Activated CD8-positive, alpha-beta T cell treated with anti-CD3 and anti-CD28 coated beads for 36 hours (primary cell): ENCODE measurements at regions of chr9 and their contacts with region 1.

Region 1: DNA sequence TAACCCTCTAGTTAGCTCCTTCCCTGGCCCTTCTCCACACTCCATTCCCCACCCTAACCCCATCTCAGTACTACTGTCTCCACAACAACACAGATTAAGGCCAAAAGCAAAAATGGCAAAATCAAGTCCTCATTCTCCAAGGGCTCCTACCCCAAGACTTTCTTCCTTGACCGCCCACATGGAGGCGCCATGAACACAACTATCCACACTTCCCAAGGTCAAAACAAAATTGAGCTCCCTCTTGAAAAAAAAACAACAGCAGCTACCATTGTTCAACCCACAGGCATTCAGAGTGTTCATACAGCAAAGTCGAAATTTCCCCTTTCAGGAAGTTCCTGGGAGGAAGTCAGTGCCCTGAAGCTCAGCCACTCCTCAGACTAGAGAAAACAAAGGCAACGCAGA is 54.4 kb downstream of the GNAQ start:
- DNase-seq: peak; percentile 68
- ATAC-seq: no peak
- H3K4me3 Mint-ChIP-seq: no peak overlapping the region
- H3K27ac Mint-ChIP-seq: peak overlapping the region; percentile 90
- H3K4me1 Mint-ChIP-seq: peaks cover 54% of the 10 kb centered on the region
- H3K27me3 Mint-ChIP-seq: no peaks in the 10 kb centered on the region
- CTCF ChIP-seq: peak; percentile 38

Region 2: GRCh38 chr9:77848897-77849296 is 128.3 kb before region 1 on chr9:
- CTCF ChIA-PET with region 1: no interaction called
- POLR2A ChIA-PET with region 1: no interaction called
- intact Hi-C with region 1: no loop called
- DNase-seq: no peak
- ATAC-seq: no peak
- H3K4me3 Mint-ChIP-seq: no peak overlapping the region
- H3K27ac Mint-ChIP-seq: no peak overlapping the region
- H3K4me1 Mint-ChIP-seq: peaks cover 25% of the 10 kb centered on the region
- H3K27me3 Mint-ChIP-seq: no peaks in the 10 kb centered on the region
- CTCF ChIP-seq: no peak

Region 3: GRCh38 chr9:77884395-77884851 is 92.8 kb before region 1 on chr9:
- CTCF ChIA-PET with region 1: no interaction called
- POLR2A ChIA-PET with region 1: no interaction called
- intact Hi-C with region 1: no loop called
- DNase-seq: no peak
- ATAC-seq: no peak
- H3K4me3 Mint-ChIP-seq: no peak overlapping the region
- H3K27ac Mint-ChIP-seq: no peak overlapping the region
- H3K4me1 Mint-ChIP-seq: peaks cover 19% of the 10 kb centered on the region
- H3K27me3 Mint-ChIP-seq: no peaks in the 10 kb centered on the region
- CTCF ChIP-seq: no peak

Region 4: DNA sequence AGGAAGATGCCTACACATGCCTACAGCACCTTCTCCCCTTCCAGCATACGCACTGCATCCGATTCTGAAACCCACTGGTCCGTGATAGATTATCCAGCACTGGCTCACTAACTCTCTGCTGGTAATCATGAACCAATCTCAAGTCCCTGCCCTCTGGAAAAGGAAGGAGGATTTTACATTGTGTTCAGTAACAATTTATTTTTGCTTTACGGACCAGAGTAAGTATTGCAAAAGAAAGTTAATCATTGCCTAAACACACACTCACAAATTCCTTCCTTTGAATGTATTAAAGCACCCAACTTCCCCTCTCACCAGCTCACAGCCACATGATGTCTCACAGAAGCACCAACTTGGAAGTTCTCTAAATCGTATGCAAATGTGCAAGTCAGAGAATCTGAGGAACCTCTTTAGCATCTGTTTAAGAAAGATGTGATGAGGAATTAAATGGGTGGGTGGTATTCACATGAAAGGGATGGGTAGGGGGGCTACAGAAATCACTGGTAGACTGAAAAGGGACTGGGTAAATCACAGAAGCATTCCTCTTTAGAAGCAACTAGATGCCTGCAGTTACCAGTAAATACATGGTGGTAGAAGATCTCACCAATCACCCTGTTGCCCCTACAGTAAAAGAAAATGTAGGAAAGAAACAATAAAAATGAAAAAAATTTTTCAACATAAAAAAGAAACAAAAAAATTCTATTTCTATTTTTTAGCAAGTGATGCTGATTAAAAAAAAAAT is 46.0 kb after region 1 on chr9:
- CTCF ChIA-PET with region 1: interaction called, 5 read pairs
- POLR2A ChIA-PET with region 1: no interaction called
- intact Hi-C with region 1: loop called (anchors 5 kb)
- DNase-seq: peak; percentile 11
- ATAC-seq: peak; percentile 49
- H3K4me3 Mint-ChIP-seq: peak overlapping the region; percentile 45
- H3K27ac Mint-ChIP-seq: peak overlapping the region; percentile 49
- H3K4me1 Mint-ChIP-seq: peaks cover 41% of the 10 kb centered on the region
- H3K27me3 Mint-ChIP-seq: no peaks in the 10 kb centered on the region
- CTCF ChIP-seq: no peak

Region 5: DNA sequence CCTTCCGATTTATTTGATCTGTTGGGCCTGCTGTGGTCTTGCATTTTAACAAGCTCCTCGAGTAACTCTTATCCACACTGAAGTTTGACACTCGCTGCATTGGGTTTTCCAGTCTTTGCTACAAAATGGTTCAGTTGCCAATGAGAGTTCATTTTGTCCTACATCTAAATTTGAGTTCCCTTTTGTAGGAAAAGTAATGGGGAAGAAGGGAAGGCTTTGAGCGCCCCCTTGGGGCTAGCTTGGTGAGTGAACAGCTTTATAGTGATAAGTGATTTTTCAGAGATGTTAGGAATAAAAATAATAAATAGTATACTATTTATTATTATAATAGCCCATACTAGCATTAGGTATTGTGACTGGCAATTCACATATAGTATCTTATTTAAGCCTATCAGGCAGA is 144.3 kb after region 1 on chr9:
- CTCF ChIA-PET with region 1: interaction called, 23 read pairs
- POLR2A ChIA-PET with region 1: no interaction called
- intact Hi-C with region 1: loop called (anchors 5 kb)
- DNase-seq: peak; percentile 68
- ATAC-seq: no peak
- H3K4me3 Mint-ChIP-seq: no peak overlapping the region
- H3K27ac Mint-ChIP-seq: no peak overlapping the region
- H3K4me1 Mint-ChIP-seq: peaks cover 23% of the 10 kb centered on the region
- H3K27me3 Mint-ChIP-seq: peaks cover under 1% of the 10 kb centered on the region
- CTCF ChIP-seq: peak; percentile 87

Region 6: DNA sequence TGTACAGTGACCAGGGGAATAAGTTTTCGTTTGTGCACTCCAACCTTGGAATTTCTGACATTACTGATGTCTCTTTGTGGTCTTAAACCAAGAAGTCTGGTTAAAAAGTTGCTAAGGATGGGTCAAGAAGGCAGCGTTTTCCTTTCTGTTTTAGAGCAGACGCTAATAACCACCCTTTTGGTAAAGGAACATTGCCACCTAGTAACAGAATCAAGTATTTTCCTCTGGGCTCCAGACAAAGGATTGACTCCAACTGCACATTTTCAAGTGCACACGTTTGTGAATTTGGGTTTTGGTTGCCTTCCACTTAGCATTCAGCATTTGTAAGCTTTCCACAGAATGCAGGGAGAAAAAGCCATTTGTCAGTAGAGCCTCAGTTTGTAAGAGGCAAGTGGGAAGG is 236.5 kb after region 1 on chr9:
- CTCF ChIA-PET with region 1: no interaction called
- POLR2A ChIA-PET with region 1: no interaction called
- intact Hi-C with region 1: loop called (anchors 5 kb)
- DNase-seq: no peak
- ATAC-seq: peak; percentile 49
- H3K4me3 Mint-ChIP-seq: no peak overlapping the region
- H3K27ac Mint-ChIP-seq: no peak overlapping the region
- H3K4me1 Mint-ChIP-seq: peaks cover 35% of the 10 kb centered on the region
- H3K27me3 Mint-ChIP-seq: no peaks in the 10 kb centered on the region
- CTCF ChIP-seq: peak; percentile 55